Activated CD8-positive, alpha-beta memory T cell treated with anti-CD3 and anti-CD28 coated beads, Interleukin-2, amount 10 ng/mL, durations not matched to agents 7 days and 5 days (primary cell): ENCODE measurements at regions of chr6 and their contacts with region 1.

Region 1: GRCh38 chr6:133973109-133973971 is 20.3 kb downstream of the TBPL1 start:
- DNase-seq: no peak
- ATAC-seq: peak; percentile 40
- H3K4me3 Mint-ChIP-seq: no peak overlapping the region
- H3K27ac Mint-ChIP-seq: no peak overlapping the region
- H3K4me1 Mint-ChIP-seq: peaks cover 18% of the 10 kb centered on the region
- H3K27me3 Mint-ChIP-seq: no peaks in the 10 kb centered on the region

Region 2: DNA sequence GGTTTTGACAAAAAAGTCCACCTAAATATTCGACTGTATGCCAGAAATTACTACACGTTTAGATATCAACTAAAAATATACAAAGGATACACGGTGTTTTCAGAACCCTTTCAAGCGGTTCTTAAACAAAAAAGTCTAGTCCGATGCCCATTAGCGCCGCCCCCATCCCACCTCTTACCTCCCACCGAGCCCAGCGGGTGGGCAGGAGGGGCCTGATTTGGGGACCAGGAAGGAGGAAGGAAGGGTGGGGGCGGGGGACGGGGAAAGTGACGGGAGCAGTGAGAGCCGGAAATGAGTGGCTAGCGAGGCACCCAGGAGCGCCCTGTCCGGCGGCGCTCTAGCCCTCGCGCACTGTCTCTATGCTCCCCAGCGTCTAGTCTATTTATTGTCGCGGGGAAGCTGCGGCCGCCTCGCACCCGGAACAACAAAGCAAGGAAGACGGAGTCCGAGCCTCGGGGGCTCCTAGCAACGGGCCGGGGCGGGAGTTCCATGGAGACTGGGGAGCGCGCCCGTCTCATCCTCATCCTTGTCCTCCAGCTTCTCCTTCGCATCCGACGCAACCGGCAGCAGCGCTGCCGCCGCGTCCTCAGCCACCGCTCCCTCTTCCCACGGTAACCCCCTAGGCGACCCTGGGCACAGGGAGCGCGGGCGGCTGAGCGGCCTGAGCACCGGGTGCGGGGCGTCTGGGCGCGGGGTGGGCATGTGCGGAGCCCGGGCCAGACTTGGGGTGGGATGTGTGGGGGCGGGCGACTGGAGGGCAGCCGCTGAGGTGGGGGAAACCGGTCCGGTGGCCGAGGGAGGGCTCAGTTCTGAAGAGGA is 20.3 kb before region 1 on chr6 and contains the start of gene TBPL1:
- CTCF ChIA-PET with region 1: interaction called, 15 read pairs
- DNase-seq: peak; percentile 94
- ATAC-seq: peak; percentile 89
- H3K4me3 Mint-ChIP-seq: peak within 1 kb of the TSS; percentile 97
- H3K27ac Mint-ChIP-seq: peak within 1 kb of the TSS; percentile 88
- H3K4me1 Mint-ChIP-seq: peaks cover 38% of the 10 kb centered on the region
- H3K27me3 Mint-ChIP-seq: peaks cover 2% of the 10 kb centered on the region
- total RNA-seq, gene TBPL1: 30.7 to 33.9 TPM

Region 3: DNA sequence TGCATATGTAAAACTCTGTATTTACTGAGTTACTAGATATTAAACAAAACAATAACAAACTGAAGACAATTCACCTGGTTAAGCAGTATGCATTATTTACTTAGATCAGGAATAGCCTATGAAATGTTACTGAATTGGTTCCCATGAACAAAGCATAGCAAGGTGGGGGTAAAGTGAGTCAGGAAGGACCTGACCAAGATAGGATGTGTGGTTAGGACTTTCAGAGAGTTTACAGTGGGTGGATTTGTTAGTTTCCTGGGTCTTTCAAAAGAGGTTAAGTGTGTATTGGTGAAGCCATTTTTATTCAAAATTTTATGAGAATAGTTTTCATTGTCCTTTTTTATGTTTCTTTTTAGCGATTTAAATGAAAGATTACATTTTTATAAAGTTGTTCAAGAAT is 12.6 kb after region 1 on chr6:
- CTCF ChIA-PET with region 1: interaction called, 10 read pairs
- DNase-seq: no peak
- ATAC-seq: peak; percentile 61
- H3K4me3 Mint-ChIP-seq: no peak overlapping the region
- H3K27ac Mint-ChIP-seq: no peak overlapping the region
- H3K4me1 Mint-ChIP-seq: peaks cover 35% of the 10 kb centered on the region
- H3K27me3 Mint-ChIP-seq: no peaks in the 10 kb centered on the region

Region 4: DNA sequence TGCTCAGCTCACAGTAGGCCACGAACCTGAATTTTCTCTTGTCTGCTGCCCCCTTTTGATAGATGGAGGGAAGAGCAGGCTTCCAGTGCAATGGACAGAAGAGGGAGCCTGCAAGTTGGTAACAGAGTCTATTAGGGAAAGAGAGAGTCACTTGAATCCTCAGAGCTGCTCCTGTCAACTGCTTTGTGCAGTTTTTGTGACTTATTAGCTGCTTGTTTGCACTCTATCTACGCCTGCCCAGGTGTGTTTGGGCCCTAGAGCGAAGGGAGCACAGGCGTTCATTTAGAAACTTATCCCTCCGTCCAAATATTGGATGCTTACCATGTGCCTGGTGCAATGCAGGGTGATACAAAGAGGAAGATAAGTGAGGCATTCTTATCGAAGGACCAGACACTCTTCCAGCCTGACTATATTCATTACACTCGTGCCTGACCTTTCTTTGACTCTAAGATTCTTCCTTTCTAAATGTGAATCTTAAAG is 90.7 kb after region 1 on chr6:
- CTCF ChIA-PET with region 1: interaction called, 43 read pairs
- DNase-seq: peak; percentile 66
- ATAC-seq: peak; percentile 91
- H3K4me3 Mint-ChIP-seq: no peak overlapping the region
- H3K27ac Mint-ChIP-seq: no peak overlapping the region
- H3K4me1 Mint-ChIP-seq: no peaks in the 10 kb centered on the region
- H3K27me3 Mint-ChIP-seq: peaks cover 2% of the 10 kb centered on the region

Region 5: GRCh38 chr6:134097114-134097707 is 123.9 kb after region 1 on chr6:
- CTCF ChIA-PET with region 1: interaction called, 37 read pairs
- DNase-seq: peak; percentile 74
- ATAC-seq: no peak
- H3K4me3 Mint-ChIP-seq: no peak overlapping the region
- H3K27ac Mint-ChIP-seq: no peak overlapping the region
- H3K4me1 Mint-ChIP-seq: peaks cover 7% of the 10 kb centered on the region
- H3K27me3 Mint-ChIP-seq: peaks cover 27% of the 10 kb centered on the region

Region 6: DNA sequence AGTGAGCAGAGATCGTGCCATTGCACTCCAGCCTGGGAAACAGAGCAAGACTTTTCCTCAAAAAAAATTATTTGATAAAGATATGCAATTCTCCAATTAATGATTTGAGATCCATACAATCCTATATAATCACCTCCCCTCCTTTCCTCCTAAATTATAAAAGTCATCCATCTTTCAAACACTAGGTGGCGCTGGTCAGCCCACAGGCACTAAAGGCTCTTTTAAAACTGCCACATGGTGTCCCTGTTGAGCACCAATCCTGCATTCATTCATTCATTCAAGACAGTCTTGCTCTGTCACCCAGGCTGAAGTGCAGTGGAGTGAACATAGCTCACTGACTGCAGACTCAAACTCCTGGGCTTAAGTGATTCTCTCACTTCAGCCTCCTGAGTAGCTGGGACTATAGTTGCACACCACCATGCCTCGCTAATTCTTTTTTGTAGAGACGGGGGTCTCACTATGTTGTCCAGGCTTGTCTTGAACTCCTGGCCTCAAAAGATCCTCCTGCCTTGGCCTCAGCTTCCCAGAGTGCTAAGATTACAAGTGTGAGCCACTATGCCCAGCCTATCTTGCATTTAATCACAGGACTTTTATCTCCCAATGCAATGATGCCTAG is 137.8 kb after region 1 on chr6:
- CTCF ChIA-PET with region 1: interaction called, 11 read pairs
- DNase-seq: peak; percentile 60
- ATAC-seq: peak; percentile 69
- H3K4me3 Mint-ChIP-seq: no peak overlapping the region
- H3K27ac Mint-ChIP-seq: no peak overlapping the region
- H3K4me1 Mint-ChIP-seq: peaks cover 4% of the 10 kb centered on the region
- H3K27me3 Mint-ChIP-seq: peaks cover 39% of the 10 kb centered on the region